CD4-positive, alpha-beta T cell (primary cell): ENCODE measurements at regions of chr4 and their contacts with region 1.

Region 1: DNA sequence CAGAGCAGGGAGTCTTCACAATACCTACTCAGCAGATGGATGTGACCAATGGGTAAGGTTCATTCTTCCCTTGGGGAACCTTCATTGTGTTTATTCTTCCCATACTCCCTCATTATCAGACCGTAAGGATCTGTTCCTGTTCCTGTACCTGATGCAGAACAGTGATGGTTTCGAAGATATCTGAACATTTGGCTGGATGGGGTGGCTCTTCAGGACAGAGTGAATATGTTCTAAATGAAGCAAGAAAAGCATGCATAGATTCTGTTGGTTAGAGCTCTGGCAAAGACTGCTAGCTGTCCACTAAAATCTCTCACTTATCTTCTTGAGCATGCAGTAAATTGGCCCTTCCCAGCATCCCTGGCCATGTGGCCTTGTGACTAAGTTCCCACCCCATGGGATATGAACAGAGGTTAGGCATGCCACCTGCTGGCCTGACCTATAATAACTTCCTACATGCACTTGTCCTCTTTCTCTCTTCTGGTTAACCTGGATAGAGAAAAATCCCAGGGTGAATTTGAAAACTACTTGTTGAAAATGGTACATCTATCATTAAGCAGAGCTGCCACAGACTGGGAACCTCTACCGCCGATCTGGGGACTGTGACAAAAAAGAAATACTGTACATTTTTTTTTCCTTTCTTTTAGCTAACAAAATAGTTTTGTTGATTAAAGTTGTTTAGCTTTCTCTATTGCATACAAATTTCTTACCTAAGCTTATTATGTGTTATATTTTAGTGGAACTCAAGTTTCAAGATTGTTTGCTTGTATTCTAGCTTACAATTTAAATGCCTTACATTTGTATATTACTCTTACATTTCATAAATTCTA is 60.0 kb upstream of the BANK1 start:
- DNase-seq: peak; percentile 4 to 69 (median 24)
- ATAC-seq: no peak
- H3K4me3 ChIP-seq: no peak overlapping the region
- H3K4me3 Mint-ChIP-seq: no peak overlapping the region
- H3K27ac ChIP-seq: no peak overlapping the region
- H3K27ac Mint-ChIP-seq: no peak overlapping the region
- H3K4me1 ChIP-seq: no peaks in the 10 kb centered on the region
- H3K4me1 Mint-ChIP-seq: no peaks in the 10 kb centered on the region
- H3K27me3 ChIP-seq: no peaks in the 10 kb centered on the region
- H3K27me3 Mint-ChIP-seq: peaks cover 15% of the 10 kb centered on the region
- CTCF ChIP-seq: peak; percentile 76

Region 2: DNA sequence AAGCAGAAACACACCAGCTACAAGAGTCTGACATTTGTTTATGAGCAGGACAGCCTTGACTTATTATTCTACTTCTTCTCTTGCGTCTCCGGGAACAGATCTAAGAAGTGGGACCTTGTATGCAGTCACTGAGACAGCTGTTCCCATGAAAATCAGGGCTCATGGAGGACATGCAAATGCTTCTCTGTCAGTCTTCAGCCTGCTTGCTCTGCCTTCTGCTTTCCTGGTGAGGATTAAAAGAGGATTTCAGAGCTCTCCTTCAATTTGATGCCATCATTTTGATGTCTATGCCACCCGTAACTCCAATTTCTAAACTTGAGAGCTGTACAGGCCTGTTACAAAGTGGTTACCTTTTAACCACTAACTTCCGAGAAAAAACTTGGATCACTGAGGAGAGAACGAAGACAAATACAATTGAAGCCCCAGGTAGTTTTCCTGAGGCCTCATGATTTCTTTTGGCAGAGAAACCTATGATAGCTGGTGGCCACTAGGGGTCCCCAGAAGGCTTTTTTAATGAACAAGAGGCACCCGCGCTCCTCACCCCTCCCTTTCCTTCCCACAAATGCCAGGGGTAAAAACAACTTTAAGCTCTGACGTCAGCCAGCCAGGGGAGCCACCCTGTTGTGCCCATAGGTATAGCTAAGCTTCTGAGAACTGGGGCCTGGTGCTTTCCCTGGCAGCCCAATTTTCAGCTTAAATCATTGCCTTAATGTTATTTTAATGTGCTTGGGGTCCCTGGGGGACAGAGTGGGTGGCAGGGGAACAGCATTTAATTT is 1637.2 kb before region 1 on chr4:
- CTCF ChIA-PET with region 1: no interaction called
- POLR2A ChIA-PET with region 1: interaction called, 7 read pairs
- intact Hi-C with region 1: loop called (anchors 2 to 5 kb)
- DNase-seq: peak; percentile 70 to 96 (median 81)
- ATAC-seq: peak; percentile 99
- H3K4me3 ChIP-seq: no peak overlapping the region
- H3K4me3 Mint-ChIP-seq: no peak overlapping the region
- H3K27ac ChIP-seq: no peak overlapping the region
- H3K27ac Mint-ChIP-seq: peak overlapping the region; percentile 92
- H3K4me1 ChIP-seq: peaks cover 7% of the 10 kb centered on the region
- H3K4me1 Mint-ChIP-seq: peaks cover 30% of the 10 kb centered on the region
- H3K27me3 ChIP-seq: no peaks in the 10 kb centered on the region
- H3K27me3 Mint-ChIP-seq: no peaks in the 10 kb centered on the region
- CTCF ChIP-seq: peak; percentile 78

Region 3: GRCh38 chr4:100421361-100421978 is 1309.0 kb before region 1 on chr4:
- CTCF ChIA-PET with region 1: no interaction called
- POLR2A ChIA-PET with region 1: no interaction called
- intact Hi-C with region 1: loop called in 1 of 2 experiments (anchors 5 kb)
- DNase-seq: peak in 3 of 14 experiments; percentile 8 to 17 (median 15)
- ATAC-seq: no peak
- H3K4me3 ChIP-seq: no peak overlapping the region
- H3K4me3 Mint-ChIP-seq: no peak overlapping the region
- H3K27ac ChIP-seq: no peak overlapping the region
- H3K27ac Mint-ChIP-seq: no peak overlapping the region
- H3K4me1 ChIP-seq: no peaks in the 10 kb centered on the region
- H3K4me1 Mint-ChIP-seq: no peaks in the 10 kb centered on the region
- H3K27me3 ChIP-seq: no peaks in the 10 kb centered on the region
- H3K27me3 Mint-ChIP-seq: no peaks in the 10 kb centered on the region
- CTCF ChIP-seq: peak; percentile 50

Region 4: GRCh38 chr4:101169044-101170014 is 561.2 kb before region 1 on chr4:
- CTCF ChIA-PET with region 1: interaction called, 5 read pairs
- POLR2A ChIA-PET with region 1: no interaction called
- intact Hi-C with region 1: loop called (anchors 1 to 2 kb)
- DNase-seq: peak in 13 of 14 experiments; percentile 6 to 78 (median 31)
- ATAC-seq: peak; percentile 84
- H3K4me3 ChIP-seq: no peak overlapping the region
- H3K4me3 Mint-ChIP-seq: no peak overlapping the region
- H3K27ac ChIP-seq: no peak overlapping the region
- H3K27ac Mint-ChIP-seq: no peak overlapping the region
- H3K4me1 ChIP-seq: peaks cover 3% of the 10 kb centered on the region
- H3K4me1 Mint-ChIP-seq: no peaks in the 10 kb centered on the region
- H3K27me3 ChIP-seq: no peaks in the 10 kb centered on the region
- H3K27me3 Mint-ChIP-seq: no peaks in the 10 kb centered on the region
- CTCF ChIP-seq: peak; percentile 63

Region 5: DNA sequence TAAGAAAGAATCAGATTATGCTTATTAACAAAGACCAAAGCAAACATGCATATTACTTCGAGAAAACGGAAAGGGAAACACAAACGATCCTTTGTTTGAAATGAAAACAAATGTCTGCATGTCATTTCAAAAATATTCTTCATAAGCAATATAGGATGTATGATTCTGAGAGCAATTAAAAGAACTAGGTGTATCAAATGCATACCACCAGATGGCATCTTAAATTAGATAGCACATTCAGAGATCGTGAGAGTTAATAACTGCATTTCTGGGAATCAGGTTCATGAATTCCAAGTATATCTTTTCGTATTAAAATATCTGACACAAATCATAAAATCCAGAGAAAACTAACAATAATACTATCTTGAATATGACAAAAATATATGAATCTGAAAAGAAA is 542.7 kb before region 1 on chr4:
- CTCF ChIA-PET with region 1: no interaction called
- POLR2A ChIA-PET with region 1: no interaction called
- intact Hi-C with region 1: loop called in 1 of 2 experiments (anchors 5 kb)
- DNase-seq: peak in 3 of 14 experiments; percentile 27 to 34 (median 31)
- ATAC-seq: no peak
- H3K4me3 ChIP-seq: no peak overlapping the region
- H3K4me3 Mint-ChIP-seq: no peak overlapping the region
- H3K27ac ChIP-seq: no peak overlapping the region
- H3K27ac Mint-ChIP-seq: no peak overlapping the region
- H3K4me1 ChIP-seq: no peaks in the 10 kb centered on the region
- H3K4me1 Mint-ChIP-seq: peaks cover 17% of the 10 kb centered on the region
- H3K27me3 ChIP-seq: no peaks in the 10 kb centered on the region
- H3K27me3 Mint-ChIP-seq: no peaks in the 10 kb centered on the region
- CTCF ChIP-seq: no peak

Region 6: GRCh38 chr4:101643186-101643837 is 87.2 kb before region 1 on chr4:
- CTCF ChIA-PET with region 1: no interaction called
- POLR2A ChIA-PET with region 1: no interaction called
- intact Hi-C with region 1: no loop called
- DNase-seq: no peak
- ATAC-seq: no peak
- H3K4me3 ChIP-seq: no peak overlapping the region
- H3K4me3 Mint-ChIP-seq: no peak overlapping the region
- H3K27ac ChIP-seq: no peak overlapping the region
- H3K27ac Mint-ChIP-seq: no peak overlapping the region
- H3K4me1 ChIP-seq: no peaks in the 10 kb centered on the region
- H3K4me1 Mint-ChIP-seq: no peaks in the 10 kb centered on the region
- H3K27me3 ChIP-seq: peaks cover 0 to 6% of the 10 kb centered on the region in 2 experiments
- H3K27me3 Mint-ChIP-seq: peaks cover 28% of the 10 kb centered on the region
- CTCF ChIP-seq: no peak

Region 7: DNA sequence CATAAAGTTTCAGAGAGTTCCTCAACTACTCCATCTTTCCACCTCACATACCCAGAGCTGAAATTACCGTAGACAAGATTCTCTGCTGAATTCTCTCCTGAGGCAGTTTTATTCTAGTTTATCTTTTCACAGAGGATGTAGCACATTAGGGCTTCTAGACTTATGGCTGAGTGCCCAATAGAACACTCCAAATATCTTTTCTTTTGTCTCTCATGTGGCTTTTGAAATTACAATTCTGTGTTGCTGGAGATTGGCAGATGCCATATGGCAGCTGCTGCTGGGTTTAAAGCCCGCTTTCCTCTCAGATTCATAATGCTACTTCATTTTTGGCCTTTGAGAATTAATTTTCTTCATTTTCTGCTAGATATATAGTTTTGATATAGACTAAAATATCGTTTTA is 47.6 kb before region 1 on chr4:
- CTCF ChIA-PET with region 1: no interaction called
- POLR2A ChIA-PET with region 1: no interaction called
- intact Hi-C with region 1: no loop called
- DNase-seq: no peak
- ATAC-seq: no peak
- H3K4me3 ChIP-seq: no peak overlapping the region
- H3K4me3 Mint-ChIP-seq: no peak overlapping the region
- H3K27ac ChIP-seq: no peak overlapping the region
- H3K27ac Mint-ChIP-seq: no peak overlapping the region
- H3K4me1 ChIP-seq: no peaks in the 10 kb centered on the region
- H3K4me1 Mint-ChIP-seq: no peaks in the 10 kb centered on the region
- H3K27me3 ChIP-seq: no peaks in the 10 kb centered on the region
- H3K27me3 Mint-ChIP-seq: no peaks in the 10 kb centered on the region
- CTCF ChIP-seq: no peak